CD14-positive monocyte (primary cell): ENCODE measurements at regions of chr17 and their contacts with region 1.

Region 1: DNA sequence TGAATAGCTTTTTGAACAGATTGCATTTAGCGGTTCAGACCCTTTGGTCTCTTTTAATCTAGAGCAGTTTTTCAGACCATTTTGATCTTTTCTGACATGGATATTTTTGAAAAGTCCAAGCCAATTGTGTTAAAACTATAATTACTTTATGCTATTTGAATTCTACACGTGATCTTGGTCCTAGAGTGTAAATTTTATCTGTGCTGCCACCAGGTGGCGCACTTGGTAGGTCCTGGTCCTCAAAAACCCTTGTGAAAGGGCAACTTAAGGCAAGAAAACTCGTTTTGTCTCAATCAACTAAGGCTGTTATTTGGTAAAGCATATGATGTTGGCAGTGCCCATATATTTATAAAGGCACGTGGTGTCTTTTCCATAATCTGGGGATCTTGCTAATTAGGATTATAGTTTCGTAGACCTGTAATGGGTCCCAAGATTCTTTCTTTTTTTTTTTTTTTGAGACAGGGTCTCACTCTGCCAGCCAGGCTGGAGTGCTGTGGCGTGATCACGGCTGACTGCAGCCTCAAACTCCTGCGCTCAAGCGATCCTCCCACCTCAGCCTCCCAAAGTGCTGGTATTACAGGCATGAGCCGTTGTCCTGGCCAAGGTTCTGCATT is 43.9 kb upstream of the TEX2 start:
- DNase-seq: peak; percentile 73 to 75 (median 75)
- H3K4me3 ChIP-seq: no peak overlapping the region
- H3K4me3 Mint-ChIP-seq: no peak overlapping the region
- H3K27ac ChIP-seq: no peak overlapping the region
- H3K27ac Mint-ChIP-seq: no peak overlapping the region
- H3K4me1 ChIP-seq: peaks cover 12 to 17% of the 10 kb centered on the region in 2 donors
- H3K4me1 Mint-ChIP-seq: peaks cover 24% of the 10 kb centered on the region
- H3K27me3 ChIP-seq: no peaks in the 10 kb centered on the region
- H3K27me3 Mint-ChIP-seq: no peaks in the 10 kb centered on the region
- CTCF ChIP-seq: peak; percentile 88

Region 2: DNA sequence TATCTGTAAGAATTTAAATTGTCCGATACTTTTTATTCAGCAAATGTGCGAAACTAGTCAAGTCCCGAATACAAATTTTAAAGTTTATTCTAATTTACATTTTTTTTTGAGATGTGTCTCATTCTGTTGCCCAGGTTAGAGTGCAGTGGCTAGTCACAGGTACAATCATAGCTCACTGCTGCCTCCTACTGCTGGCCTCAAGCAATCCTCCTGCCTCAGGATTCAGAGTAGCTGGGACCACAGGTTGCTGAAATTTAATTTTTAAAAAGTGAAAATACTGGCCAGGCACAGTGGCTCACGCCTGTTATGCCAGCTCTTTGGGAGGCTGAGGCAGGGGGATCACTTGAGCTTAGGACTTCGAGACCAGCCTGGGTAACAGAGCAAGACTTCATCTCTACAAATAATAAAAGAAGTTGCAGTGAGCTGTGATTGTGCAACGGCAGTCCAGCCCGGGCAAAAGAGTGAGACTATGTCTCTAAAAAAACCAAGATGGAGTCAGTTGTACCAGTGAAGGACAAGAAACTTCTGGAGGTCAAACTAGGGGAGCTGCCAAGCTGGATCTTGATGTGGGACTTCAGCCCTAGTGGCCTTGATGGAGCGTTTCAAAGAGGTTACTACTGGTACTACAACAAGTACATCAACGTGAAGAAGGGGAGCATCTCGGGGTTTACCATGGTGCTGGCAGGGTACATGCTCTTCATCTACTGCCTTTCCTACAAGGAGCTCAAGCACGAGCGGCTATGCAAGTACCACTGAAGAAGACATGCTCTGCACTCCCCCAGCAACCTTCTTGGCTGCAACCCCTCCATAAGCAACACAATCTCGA is 184.3 kb after region 1 on chr17:
- intact Hi-C with region 1: loop called (anchors 5 to 10 kb)
- DNase-seq: peak in 2 of 3 donors; percentile 60 to 62
- H3K4me3 ChIP-seq: no peak overlapping the region
- H3K4me3 Mint-ChIP-seq: no peak overlapping the region
- H3K27ac ChIP-seq: peak overlapping the region in 1 of 2 donors; percentile 33
- H3K27ac Mint-ChIP-seq: peak overlapping the region in 6 of 7 donors; percentile 40 to 71 (median 70)
- H3K4me1 ChIP-seq: peaks cover 29 to 31% of the 10 kb centered on the region in 2 donors
- H3K4me1 Mint-ChIP-seq: peaks cover 30% of the 10 kb centered on the region
- H3K27me3 ChIP-seq: no peaks in the 10 kb centered on the region
- H3K27me3 Mint-ChIP-seq: peaks cover 0 to 1% (median 0%) of the 10 kb centered on the region in 3 donors
- CTCF ChIP-seq: peak; percentile 91

Region 3: DNA sequence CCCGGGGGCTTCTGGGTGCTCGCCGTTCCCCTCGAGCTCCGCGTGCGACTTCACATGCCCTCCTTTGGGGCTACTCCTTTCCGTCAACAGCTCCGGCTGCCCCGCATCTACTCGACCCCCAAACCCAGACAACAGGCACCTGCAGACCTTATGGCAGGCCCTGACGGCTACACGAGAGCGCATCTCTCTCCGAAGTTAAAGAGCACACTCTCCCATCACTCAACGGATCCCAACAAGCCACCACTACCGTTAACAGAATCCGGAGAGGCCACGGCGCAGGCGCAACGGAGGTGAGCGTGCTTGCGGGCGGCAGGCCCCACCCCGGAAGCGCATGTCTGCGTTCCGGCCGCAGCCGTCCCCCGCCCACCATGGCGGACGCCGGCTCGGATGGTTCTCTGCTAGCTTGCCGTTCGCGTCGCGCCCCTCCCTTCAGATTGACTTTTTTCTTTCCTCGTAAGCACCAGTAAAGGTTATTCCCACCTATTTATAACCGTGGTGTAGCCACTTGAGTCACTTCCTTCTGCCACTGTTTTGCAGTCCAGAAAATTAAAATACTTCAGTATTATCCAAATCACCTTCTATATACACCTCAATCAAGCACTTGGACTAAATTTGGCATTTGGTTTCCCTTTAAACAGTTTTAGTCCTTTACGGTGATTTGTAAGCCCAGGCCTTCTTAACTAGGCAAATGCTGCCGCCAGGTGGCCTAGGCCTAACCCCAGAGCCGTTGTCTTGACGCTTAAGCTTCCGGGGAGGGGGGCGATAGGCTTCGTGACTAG is 190.0 kb after region 1 on chr17 and contains the start of gene POLG2:
- intact Hi-C with region 1: loop called in 1 of 2 experiments (anchors 10 kb)
- DNase-seq: peak; percentile 91 to 94 (median 94)
- H3K4me3 ChIP-seq: peak within 1 kb of the TSS; percentile 57 to 84 (median 70)
- H3K4me3 Mint-ChIP-seq: peak within 1 kb of the TSS; percentile 99 to 100
- H3K27ac ChIP-seq: peak within 1 kb of the TSS; percentile 90 to 97
- H3K27ac Mint-ChIP-seq: peak within 1 kb of the TSS; percentile 96 to 99 (median 98)
- H3K4me1 ChIP-seq: peaks cover 31 to 40% of the 10 kb centered on the region in 2 donors
- H3K4me1 Mint-ChIP-seq: peaks cover 55% of the 10 kb centered on the region
- H3K27me3 ChIP-seq: no peaks in the 10 kb centered on the region
- H3K27me3 Mint-ChIP-seq: peaks cover 0 to 2% (median 0%) of the 10 kb centered on the region in 3 donors
- CTCF ChIP-seq: peak; percentile 61
- polyA plus RNA-seq, gene POLG2: 0.85 to 15.8 (median 1.7) TPM